MCF 10A (cell line): ENCODE measurements at regions of chr14 and their contacts with region 1.

Region 1: GRCh38 chr14:95935228-95935822 is 58.7 kb downstream of the TUNAR start:
- DNase-seq: peak; percentile 48
- H3K4me3 Mint-ChIP-seq: no peak overlapping the region
- H3K27ac Mint-ChIP-seq: no peak overlapping the region
- H3K4me1 Mint-ChIP-seq: no peaks in the 10 kb centered on the region
- H3K27me3 Mint-ChIP-seq: peaks cover 23% of the 10 kb centered on the region
- CTCF ChIP-seq: no peak

Region 2: DNA sequence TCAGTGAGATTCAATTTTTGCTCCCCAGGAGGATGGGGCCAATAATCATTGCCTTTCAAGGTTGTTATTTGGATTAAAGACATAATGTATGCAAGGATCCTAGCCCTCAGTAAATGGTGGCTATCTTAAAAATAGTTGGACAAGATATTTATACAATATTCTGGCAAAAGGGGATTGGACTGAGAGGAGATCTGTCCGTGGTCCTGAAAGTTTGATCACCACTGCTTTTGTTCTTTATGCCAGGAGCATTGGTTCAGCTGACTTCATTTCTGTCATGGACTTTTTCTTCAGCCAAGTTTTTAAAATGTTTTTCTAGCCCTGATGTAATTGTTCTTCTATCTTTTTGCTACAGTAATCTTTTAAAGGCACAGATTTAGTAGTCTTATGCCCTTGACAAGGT is 151.2 kb before region 1 on chr14:
- CTCF ChIA-PET with region 1: no interaction called
- POLR2A ChIA-PET with region 1: no interaction called
- intact Hi-C with region 1: loop called (anchors 10 kb)
- DNase-seq: peak; percentile 59
- H3K4me3 Mint-ChIP-seq: no peak overlapping the region
- H3K27ac Mint-ChIP-seq: no peak overlapping the region
- H3K4me1 Mint-ChIP-seq: no peaks in the 10 kb centered on the region
- H3K27me3 Mint-ChIP-seq: peaks cover 27% of the 10 kb centered on the region
- CTCF ChIP-seq: no peak

Region 3: GRCh38 chr14:95952945-95953724 is 17.8 kb after region 1 on chr14:
- CTCF ChIA-PET with region 1: no interaction called
- POLR2A ChIA-PET with region 1: no interaction called
- intact Hi-C with region 1: loop called (anchors 1 kb)
- DNase-seq: peak; percentile 48
- H3K4me3 Mint-ChIP-seq: no peak overlapping the region
- H3K27ac Mint-ChIP-seq: no peak overlapping the region
- H3K4me1 Mint-ChIP-seq: no peaks in the 10 kb centered on the region
- H3K27me3 Mint-ChIP-seq: peaks cover 29% of the 10 kb centered on the region
- CTCF ChIP-seq: no peak